Activated CD4-positive, alpha-beta memory T cell treated with anti-CD3 and anti-CD28 coated beads for 36 hours (primary cell): ENCODE measurements at regions of chr22 and their contacts with region 1.

Region 1: GRCh38 chr22:28800308-28801077 is at the start of gene XBP1:
- DNase-seq: peak; percentile 92
- H3K4me3 Mint-ChIP-seq: peak within 1 kb of the TSS; percentile 94
- H3K27ac Mint-ChIP-seq: peak within 1 kb of the TSS; percentile 96
- H3K4me1 Mint-ChIP-seq: peaks cover 46% of the 10 kb centered on the region
- H3K27me3 Mint-ChIP-seq: no peaks in the 10 kb centered on the region
- total RNA-seq, gene XBP1: 128 to 132 TPM

Region 2: GRCh38 chr22:28560046-28560742 is 240.3 kb before region 1 on chr22:
- CTCF ChIA-PET with region 1: no interaction called
- POLR2A ChIA-PET with region 1: no interaction called
- intact Hi-C with region 1: no loop called
- DNase-seq: no peak
- H3K4me3 Mint-ChIP-seq: no peak overlapping the region
- H3K27ac Mint-ChIP-seq: no peak overlapping the region
- H3K4me1 Mint-ChIP-seq: no peaks in the 10 kb centered on the region
- H3K27me3 Mint-ChIP-seq: peaks cover 20% of the 10 kb centered on the region

Region 3: DNA sequence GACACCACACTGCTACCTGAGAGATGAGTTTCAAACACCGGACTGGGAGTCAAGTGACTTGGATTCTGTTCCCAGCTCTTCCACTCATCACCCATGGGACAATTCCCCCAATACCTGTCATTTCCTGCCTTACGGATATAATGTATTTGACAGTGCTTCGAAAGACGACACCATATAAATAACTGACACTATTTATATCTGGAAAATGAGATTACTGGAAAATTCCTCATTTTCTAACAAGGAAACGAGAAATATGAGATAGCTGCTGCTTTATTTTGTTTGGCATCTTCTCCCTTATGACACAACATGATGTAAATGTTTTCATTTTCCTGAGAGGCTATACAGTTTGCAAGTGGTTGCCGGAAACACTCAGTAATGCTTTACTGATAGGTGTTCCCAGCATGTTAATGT is 50.0 kb before region 1 on chr22:
- CTCF ChIA-PET with region 1: no interaction called
- POLR2A ChIA-PET with region 1: no interaction called
- intact Hi-C with region 1: no loop called
- DNase-seq: no peak
- H3K4me3 Mint-ChIP-seq: no peak overlapping the region
- H3K27ac Mint-ChIP-seq: no peak overlapping the region
- H3K4me1 Mint-ChIP-seq: no peaks in the 10 kb centered on the region
- H3K27me3 Mint-ChIP-seq: no peaks in the 10 kb centered on the region

Region 4: DNA sequence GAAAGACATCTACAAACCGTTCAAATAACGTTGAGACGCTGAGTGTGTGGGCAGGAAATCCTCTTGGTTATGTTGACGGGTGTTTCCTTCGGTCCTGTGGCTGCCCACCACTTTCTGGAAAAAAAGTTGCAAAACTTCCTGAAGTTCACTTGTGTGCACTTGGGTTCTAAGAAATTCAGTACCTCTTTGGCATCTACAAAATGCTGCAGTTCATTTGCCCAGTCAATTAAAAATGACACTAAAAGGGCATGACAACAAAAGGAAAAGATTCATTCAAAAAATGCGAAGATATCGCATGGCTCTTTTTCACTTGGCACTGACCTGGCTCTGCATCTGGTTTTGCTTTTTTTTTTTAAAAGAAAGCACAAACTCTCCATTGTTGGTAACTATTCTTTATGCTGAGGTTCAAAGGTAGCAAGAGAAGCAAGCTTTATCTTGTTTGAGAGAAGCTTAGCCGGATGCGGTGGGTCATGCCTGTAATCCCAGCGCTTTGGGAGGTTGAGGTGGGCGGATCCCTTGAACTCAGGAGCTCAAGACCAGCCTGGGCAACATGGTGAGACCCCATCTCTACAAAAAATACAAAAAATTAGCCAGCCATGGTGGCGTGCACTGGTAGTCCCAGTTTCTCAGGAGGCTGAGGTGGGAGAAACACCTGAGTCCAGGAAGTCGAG is 10.5 kb after region 1 on chr22:
- CTCF ChIA-PET with region 1: interaction called, 41 read pairs
- POLR2A ChIA-PET with region 1: interaction called, 51 read pairs
- intact Hi-C with region 1: loop called (anchors 1 kb)
- DNase-seq: peak; percentile 60
- H3K4me3 Mint-ChIP-seq: peak overlapping the region; percentile 64
- H3K27ac Mint-ChIP-seq: peak overlapping the region; percentile 84
- H3K4me1 Mint-ChIP-seq: peaks cover 65% of the 10 kb centered on the region
- H3K27me3 Mint-ChIP-seq: no peaks in the 10 kb centered on the region

Region 5: DNA sequence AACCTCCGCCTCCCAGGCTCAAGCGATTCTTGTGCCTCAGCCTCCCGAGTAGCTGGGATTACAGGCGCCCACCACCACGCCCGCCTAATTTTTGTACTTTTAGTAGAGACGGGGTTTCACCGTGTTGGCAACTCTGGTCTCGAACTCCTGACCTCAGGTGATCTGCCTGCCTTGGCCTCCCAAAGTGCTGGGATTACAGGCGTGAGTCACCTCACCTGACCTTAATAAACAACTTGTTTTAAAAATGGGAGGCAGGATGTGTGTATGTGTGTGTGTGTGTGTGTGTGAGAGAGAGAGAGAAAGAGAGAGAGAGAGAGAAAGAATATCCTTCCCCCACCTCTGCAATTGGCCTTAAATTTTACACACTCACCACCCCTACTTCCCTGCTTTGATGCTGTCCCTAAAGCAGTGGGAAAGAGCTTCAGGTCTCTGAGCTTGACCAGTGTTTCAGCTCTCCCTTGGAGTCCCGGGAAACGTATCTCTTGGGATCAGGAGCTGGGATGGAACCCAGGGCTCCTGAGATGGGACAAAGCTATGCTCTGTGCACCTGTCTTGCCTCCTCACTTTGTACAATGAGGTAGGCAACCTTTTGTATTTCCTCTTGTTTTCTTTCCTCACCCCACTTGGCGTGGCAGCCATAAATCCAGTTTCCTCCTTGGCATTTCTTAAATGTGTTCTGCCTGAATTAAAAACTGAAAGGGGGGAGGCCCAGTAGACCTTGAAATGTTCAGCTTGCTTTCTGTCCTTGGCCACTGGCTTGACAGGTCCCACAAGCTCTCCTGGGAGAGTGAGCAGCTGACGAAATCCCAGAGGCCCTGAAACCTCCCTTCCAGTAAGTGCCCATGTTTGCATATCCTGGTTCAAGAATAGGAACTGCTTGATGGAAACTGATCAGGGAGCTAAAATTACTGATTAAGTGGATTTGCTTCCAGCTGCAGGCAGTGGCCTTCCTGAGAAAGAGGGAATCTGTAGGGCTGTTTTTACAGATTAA is 17.7 kb after region 1 on chr22:
- CTCF ChIA-PET with region 1: interaction called, 41 read pairs
- POLR2A ChIA-PET with region 1: interaction called, 51 read pairs
- intact Hi-C with region 1: no loop called
- DNase-seq: no peak
- H3K4me3 Mint-ChIP-seq: no peak overlapping the region
- H3K27ac Mint-ChIP-seq: peak overlapping the region; percentile 51
- H3K4me1 Mint-ChIP-seq: peaks cover 65% of the 10 kb centered on the region
- H3K27me3 Mint-ChIP-seq: no peaks in the 10 kb centered on the region

Region 6: GRCh38 chr22:28882878-28883656 is 82.6 kb after region 1 on chr22 and contains the start of gene ZNRF3:
- CTCF ChIA-PET with region 1: no interaction called
- POLR2A ChIA-PET with region 1: interaction called, 6 read pairs
- intact Hi-C with region 1: loop called (anchors 1 kb)
- DNase-seq: peak; percentile 93
- H3K4me3 Mint-ChIP-seq: peak within 1 kb of the TSS; percentile 78
- H3K27ac Mint-ChIP-seq: no peak within 1 kb of the TSS
- H3K4me1 Mint-ChIP-seq: peaks cover 15% of the 10 kb centered on the region
- H3K27me3 Mint-ChIP-seq: peaks cover 22% of the 10 kb centered on the region
- total RNA-seq, gene ZNRF3: 1.3 to 1.5 TPM